ENCODE measurements at regions of chr18 and their contacts with region 1.

Region 1: GRCh38 chr18:45384137-45384961 is 230.9 kb upstream of the SLC14A2 start:
- DNase-seq: peak; percentile 66
- H3K4me3 ChIP-seq: no peak overlapping the region
- H3K27ac ChIP-seq: no peak overlapping the region
- H3K4me1 ChIP-seq: no peaks in the 10 kb centered on the region
- H3K27me3 ChIP-seq: no peaks in the 10 kb centered on the region
- CTCF ChIP-seq: peak; percentile 64

Region 2: DNA sequence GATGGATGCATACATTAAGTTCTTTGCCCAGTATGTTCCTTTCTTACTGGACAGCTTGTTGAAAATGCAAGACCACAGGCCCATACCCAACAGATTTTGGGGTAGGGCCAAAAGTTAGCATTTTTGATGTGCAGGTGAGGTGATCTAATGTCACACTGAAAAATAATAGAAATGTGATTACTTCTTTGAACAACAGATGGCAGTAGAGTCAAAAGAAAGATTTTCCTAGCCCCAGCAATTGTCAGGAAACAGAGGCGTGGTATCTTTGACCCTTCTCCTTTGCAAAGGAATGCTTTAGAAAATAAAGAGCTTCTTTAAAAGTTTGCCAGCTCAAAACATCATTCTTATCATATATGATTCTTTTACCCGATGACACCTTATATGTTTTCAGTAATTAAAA is 1763.4 kb before region 1 on chr18:
- intact Hi-C with region 1: loop called (anchors 10 kb)
- DNase-seq: no peak
- H3K4me3 ChIP-seq: no peak overlapping the region
- H3K27ac ChIP-seq: no peak overlapping the region
- H3K4me1 ChIP-seq: no peaks in the 10 kb centered on the region
- H3K27me3 ChIP-seq: no peaks in the 10 kb centered on the region
- CTCF ChIP-seq: peak; percentile 32

Region 3: GRCh38 chr18:44679056-44679905 is 705.1 kb before region 1 on chr18:
- intact Hi-C with region 1: loop called (anchors 10 kb)
- DNase-seq: peak; percentile 88
- H3K4me3 ChIP-seq: peak overlapping the region; percentile 73
- H3K27ac ChIP-seq: peak overlapping the region; percentile 93
- H3K4me1 ChIP-seq: no peaks in the 10 kb centered on the region
- H3K27me3 ChIP-seq: no peaks in the 10 kb centered on the region
- CTCF ChIP-seq: peak; percentile 63

Region 4: DNA sequence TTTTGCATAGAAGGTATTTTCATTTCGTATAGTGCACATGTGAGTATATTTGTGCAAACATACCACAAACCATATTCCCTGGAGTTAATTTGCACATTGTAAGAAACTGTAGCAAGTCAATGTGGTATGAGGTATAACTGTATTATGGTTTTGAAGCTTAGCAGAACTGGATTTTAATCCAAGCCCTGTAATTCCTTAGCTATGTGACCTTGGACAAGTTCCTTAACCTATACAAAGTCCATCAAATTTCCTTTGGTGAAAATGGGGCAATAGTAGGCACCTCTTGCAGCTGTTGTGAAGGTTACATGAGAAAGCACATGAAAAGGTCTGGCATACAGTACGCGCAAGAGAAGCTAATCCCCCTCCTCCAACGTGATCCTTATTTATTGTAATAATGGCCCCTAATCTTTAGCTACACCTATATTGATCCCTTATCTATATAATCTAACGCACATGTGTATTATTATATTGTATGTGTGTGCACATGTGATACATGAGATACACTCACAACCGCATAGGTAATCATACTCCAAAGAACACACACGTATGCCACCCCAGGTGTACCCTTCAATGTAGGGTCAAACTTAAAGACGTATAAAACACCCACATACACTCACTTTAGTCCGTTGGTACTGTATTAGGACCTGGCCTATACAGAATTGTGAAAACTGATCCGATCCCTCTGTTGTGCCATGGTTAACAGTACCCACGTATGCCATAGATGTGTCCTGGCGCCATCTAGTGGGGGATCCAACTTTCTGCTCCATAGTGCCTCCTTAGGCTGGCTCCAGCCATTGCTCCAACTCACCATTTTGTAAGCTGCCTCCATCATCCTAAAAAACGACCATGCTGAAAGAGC is 171.9 kb before region 1 on chr18:
- intact Hi-C with region 1: loop called (anchors 10 kb)
- DNase-seq: peak; percentile 90
- H3K4me3 ChIP-seq: no peak overlapping the region
- H3K27ac ChIP-seq: no peak overlapping the region
- H3K4me1 ChIP-seq: no peaks in the 10 kb centered on the region
- H3K27me3 ChIP-seq: no peaks in the 10 kb centered on the region
- CTCF ChIP-seq: peak; percentile 86

Region 5: DNA sequence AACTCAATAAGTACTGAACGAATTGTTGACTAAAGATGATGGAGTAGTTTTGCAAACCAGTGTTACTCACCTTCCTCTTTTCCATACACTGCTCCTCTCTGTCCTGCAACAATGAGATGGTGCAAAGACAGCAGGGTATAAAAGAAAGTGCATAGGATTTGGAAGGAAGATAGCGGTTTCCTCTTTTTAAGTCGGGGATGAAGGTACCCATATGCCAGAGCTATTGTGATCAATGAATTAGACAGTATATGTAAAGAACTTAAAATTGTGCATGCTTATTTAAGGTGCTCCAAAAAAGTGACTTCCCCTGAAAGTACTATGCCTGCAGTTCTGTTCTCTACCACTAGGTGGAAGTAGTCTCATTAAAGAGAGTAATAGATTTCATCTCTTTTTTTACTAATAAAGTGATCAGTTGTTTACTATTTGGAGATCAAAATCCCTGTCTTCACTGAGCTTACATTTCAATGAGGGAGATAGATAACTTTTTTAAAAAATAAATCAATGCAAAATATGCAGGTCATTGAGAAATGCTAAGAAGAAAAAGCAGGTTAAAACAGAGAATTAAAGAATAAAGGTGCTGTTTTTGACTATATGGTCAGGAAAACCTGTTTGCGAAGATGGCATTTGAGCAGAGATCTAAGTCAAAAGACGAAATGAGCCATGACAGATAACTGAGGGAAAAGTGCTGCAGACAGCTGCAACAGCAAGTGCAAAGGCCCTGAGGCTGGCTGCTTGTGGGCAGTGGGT is 108.8 kb before region 1 on chr18:
- intact Hi-C with region 1: loop called (anchors 10 kb)
- DNase-seq: no peak
- H3K4me3 ChIP-seq: no peak overlapping the region
- H3K27ac ChIP-seq: no peak overlapping the region
- H3K4me1 ChIP-seq: no peaks in the 10 kb centered on the region
- H3K27me3 ChIP-seq: no peaks in the 10 kb centered on the region
- CTCF ChIP-seq: peak; percentile 79

Region 6: GRCh38 chr18:45967007-45967706 is 582.8 kb after region 1 on chr18 and contains the start of gene EPG5:
- intact Hi-C with region 1: no loop called
- DNase-seq: peak; percentile 98
- H3K4me3 ChIP-seq: peak within 1 kb of the TSS; percentile 71
- H3K27ac ChIP-seq: peak within 1 kb of the TSS; percentile 43
- H3K4me1 ChIP-seq: no peaks in the 10 kb centered on the region
- H3K27me3 ChIP-seq: no peaks in the 10 kb centered on the region
- CTCF ChIP-seq: no peak
- total RNA-seq, gene EPG5: 16.0 to 17.3 TPM

Measured in colonic mucosa (tissue), 4 donors.